CD4-positive, alpha-beta memory T cell (primary cell): ENCODE measurements at regions of chr3 and their contacts with region 1.

Region 1: GRCh38 chr3:125916376-125916978 is 52.5 kb upstream of the ROPN1B start:
- DNase-seq: peak in 3 of 5 donors; percentile 92 to 95 (median 93)
- H3K4me3 ChIP-seq: peak overlapping the region; percentile 11 to 76
- H3K4me3 Mint-ChIP-seq: peak overlapping the region; percentile 88 to 95 (median 90)
- H3K27ac ChIP-seq: peak overlapping the region; percentile 81
- H3K27ac Mint-ChIP-seq: peak overlapping the region; percentile 94 to 99 (median 97)
- H3K4me1 ChIP-seq: peaks cover 10% of the 10 kb centered on the region
- H3K4me1 Mint-ChIP-seq: peaks cover 5 to 26% (median 13%) of the 10 kb centered on the region in 4 donors
- H3K27me3 ChIP-seq: no peaks in the 10 kb centered on the region
- H3K27me3 Mint-ChIP-seq: no peaks in the 10 kb centered on the region

Region 2: GRCh38 chr3:123960781-123961507 is 1955.5 kb before region 1 on chr3 and contains the start of gene CCDC14:
- CTCF ChIA-PET with region 1: no interaction called
- POLR2A ChIA-PET with region 1: no interaction called
- intact Hi-C with region 1: loop called (anchors 5 kb)
- DNase-seq: peak; percentile 61 to 83 (median 65)
- H3K4me3 ChIP-seq: peak within 1 kb of the TSS; percentile 27 to 93
- H3K4me3 Mint-ChIP-seq: peak within 1 kb of the TSS; percentile 96 to 99 (median 98)
- H3K27ac ChIP-seq: peak within 1 kb of the TSS; percentile 65
- H3K27ac Mint-ChIP-seq: peak within 1 kb of the TSS; percentile 88 to 97 (median 93)
- H3K4me1 ChIP-seq: peaks cover 26% of the 10 kb centered on the region
- H3K4me1 Mint-ChIP-seq: peaks cover 13 to 38% (median 23%) of the 10 kb centered on the region in 4 donors
- H3K27me3 ChIP-seq: no peaks in the 10 kb centered on the region
- H3K27me3 Mint-ChIP-seq: peaks cover 0 to 2% of the 10 kb centered on the region in 2 donors
- total RNA-seq, gene CCDC14: 46.0 to 47.0 TPM

Region 3: DNA sequence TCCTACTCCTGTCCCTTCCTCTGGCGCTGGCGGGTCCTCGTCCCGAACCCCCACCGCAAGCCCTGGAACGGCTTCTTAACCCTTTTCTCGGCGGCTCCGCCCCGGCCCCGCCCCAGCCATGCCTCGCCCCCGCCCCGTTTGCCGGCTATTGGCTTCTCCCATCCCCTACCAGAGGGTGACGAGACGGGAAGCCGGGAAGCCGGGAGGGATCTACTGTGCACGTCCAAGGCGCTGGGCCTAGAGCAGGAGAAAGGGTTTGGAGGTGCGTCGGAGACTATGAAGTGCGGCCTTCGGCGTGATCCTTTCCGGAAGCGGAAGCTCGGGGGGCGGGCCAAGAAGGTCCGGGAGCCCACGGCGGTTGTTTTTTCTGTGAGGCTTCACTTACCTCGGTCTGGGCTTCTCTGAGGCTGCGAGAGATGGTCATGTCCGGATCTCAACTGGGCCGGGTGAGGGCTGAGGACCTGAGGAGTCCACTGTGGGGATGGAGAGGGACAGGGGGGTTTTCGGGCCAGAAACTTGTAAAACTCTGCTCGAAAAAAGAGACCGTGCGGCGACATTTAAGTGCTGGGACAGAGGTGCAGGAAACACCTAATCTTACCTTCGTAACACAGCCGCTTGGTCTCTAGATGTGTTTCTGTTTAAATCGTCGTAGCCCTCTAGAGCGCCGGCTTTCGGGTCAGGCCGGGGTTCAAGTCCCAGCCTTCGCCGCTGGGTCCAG is 73.9 kb after region 1 on chr3:
- CTCF ChIA-PET with region 1: no interaction called
- POLR2A ChIA-PET with region 1: interaction called, 5 read pairs
- intact Hi-C with region 1: loop called (anchors 2 kb)
- DNase-seq: peak in 4 of 5 donors; percentile 73 to 79 (median 78)
- H3K4me3 ChIP-seq: peak overlapping the region; percentile 18 to 60
- H3K4me3 Mint-ChIP-seq: peak overlapping the region in 7 of 8 donors; percentile 95 to 100 (median 99)
- H3K27ac ChIP-seq: peak overlapping the region; percentile 78
- H3K27ac Mint-ChIP-seq: peak overlapping the region in 6 of 7 donors; percentile 92 to 100 (median 98)
- H3K4me1 ChIP-seq: peaks cover 16% of the 10 kb centered on the region
- H3K4me1 Mint-ChIP-seq: peaks cover 2 to 31% (median 15%) of the 10 kb centered on the region in 4 donors
- H3K27me3 ChIP-seq: no peaks in the 10 kb centered on the region
- H3K27me3 Mint-ChIP-seq: peaks cover 0 to 4% of the 10 kb centered on the region in 2 donors

Region 4: DNA sequence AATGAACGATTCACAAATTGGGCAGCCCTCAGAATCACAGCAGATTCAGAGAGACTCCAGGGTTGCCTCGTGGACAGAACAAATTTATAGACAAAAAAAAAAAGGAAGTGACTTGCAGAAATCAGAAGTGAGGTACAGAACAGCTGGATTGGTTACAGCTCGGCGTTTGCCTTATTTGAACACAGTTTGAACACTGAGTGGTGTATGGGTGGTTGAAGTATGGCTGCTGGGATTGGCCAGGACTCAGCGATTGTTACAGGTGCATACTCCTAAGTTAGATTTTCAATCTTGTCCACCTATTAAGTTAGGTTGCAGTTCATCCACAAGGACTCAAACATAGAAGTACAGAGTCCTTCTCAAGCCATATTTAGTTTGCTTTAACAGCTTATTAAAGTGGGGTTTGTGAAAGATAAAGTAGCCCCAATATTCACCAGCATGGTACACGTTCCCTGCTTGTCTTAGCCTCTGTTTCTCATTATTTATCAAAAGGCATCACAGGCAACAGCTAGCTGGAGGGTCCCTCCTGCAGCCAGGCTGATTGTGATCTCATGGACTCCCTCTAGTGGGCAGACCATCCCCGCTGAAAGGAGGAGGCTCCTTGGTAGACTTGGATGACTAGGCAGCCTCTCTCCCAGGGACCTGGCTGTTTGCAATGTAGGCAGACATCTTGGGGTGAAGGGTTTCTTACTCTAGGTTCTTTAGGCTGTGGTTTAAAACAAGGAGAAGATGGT is 281.5 kb after region 1 on chr3:
- CTCF ChIA-PET with region 1: no interaction called
- POLR2A ChIA-PET with region 1: no interaction called
- intact Hi-C with region 1: loop called (anchors 5 kb)
- DNase-seq: peak in 3 of 5 donors; percentile 4 to 19 (median 9)
- H3K4me3 ChIP-seq: no peak overlapping the region
- H3K4me3 Mint-ChIP-seq: no peak overlapping the region
- H3K27ac ChIP-seq: no peak overlapping the region
- H3K27ac Mint-ChIP-seq: no peak overlapping the region
- H3K4me1 ChIP-seq: no peaks in the 10 kb centered on the region
- H3K4me1 Mint-ChIP-seq: peaks cover 0 to 1% (median 0%) of the 10 kb centered on the region in 4 donors
- H3K27me3 ChIP-seq: no peaks in the 10 kb centered on the region
- H3K27me3 Mint-ChIP-seq: peaks cover 8 to 15% of the 10 kb centered on the region in 2 donors

Region 5: GRCh38 chr3:126475413-126476114 is 559.1 kb after region 1 on chr3 and contains the start of gene ZXDC:
- CTCF ChIA-PET with region 1: no interaction called
- POLR2A ChIA-PET with region 1: interaction called, 9 read pairs
- intact Hi-C with region 1: loop called (anchors 1 kb)
- DNase-seq: peak; percentile 90 to 93 (median 92)
- H3K4me3 ChIP-seq: peak within 1 kb of the TSS; percentile 60 to 73
- H3K4me3 Mint-ChIP-seq: peak within 1 kb of the TSS; percentile 87 to 94 (median 92)
- H3K27ac ChIP-seq: peak within 1 kb of the TSS; percentile 64
- H3K27ac Mint-ChIP-seq: peak within 1 kb of the TSS; percentile 83 to 98 (median 92)
- H3K4me1 ChIP-seq: peaks cover 36% of the 10 kb centered on the region
- H3K4me1 Mint-ChIP-seq: peaks cover 30 to 55% (median 44%) of the 10 kb centered on the region in 4 donors
- H3K27me3 ChIP-seq: no peaks in the 10 kb centered on the region
- H3K27me3 Mint-ChIP-seq: no peaks in the 10 kb centered on the region
- total RNA-seq, gene ZXDC: 58.2 to 66.3 TPM

Region 6: GRCh38 chr3:126982471-126983175 is 1066.1 kb after region 1 on chr3 and contains the start of gene PLXNA1:
- CTCF ChIA-PET with region 1: no interaction called
- POLR2A ChIA-PET with region 1: no interaction called
- intact Hi-C with region 1: loop called (anchors 5 kb)
- DNase-seq: peak; percentile 88 to 97 (median 95)
- H3K4me3 ChIP-seq: peak within 1 kb of the TSS; percentile 61 to 76
- H3K4me3 Mint-ChIP-seq: peak within 1 kb of the TSS; percentile 84 to 92 (median 89)
- H3K27ac ChIP-seq: peak within 1 kb of the TSS; percentile 83
- H3K27ac Mint-ChIP-seq: peak within 1 kb of the TSS; percentile 95 to 98 (median 97)
- H3K4me1 ChIP-seq: peaks cover 17% of the 10 kb centered on the region
- H3K4me1 Mint-ChIP-seq: peaks cover 6 to 29% (median 17%) of the 10 kb centered on the region in 4 donors
- H3K27me3 ChIP-seq: no peaks in the 10 kb centered on the region
- H3K27me3 Mint-ChIP-seq: peaks cover 5 to 7% of the 10 kb centered on the region in 2 donors
- total RNA-seq, gene PLXNA1: 18.9 to 21.3 TPM

Region 7: DNA sequence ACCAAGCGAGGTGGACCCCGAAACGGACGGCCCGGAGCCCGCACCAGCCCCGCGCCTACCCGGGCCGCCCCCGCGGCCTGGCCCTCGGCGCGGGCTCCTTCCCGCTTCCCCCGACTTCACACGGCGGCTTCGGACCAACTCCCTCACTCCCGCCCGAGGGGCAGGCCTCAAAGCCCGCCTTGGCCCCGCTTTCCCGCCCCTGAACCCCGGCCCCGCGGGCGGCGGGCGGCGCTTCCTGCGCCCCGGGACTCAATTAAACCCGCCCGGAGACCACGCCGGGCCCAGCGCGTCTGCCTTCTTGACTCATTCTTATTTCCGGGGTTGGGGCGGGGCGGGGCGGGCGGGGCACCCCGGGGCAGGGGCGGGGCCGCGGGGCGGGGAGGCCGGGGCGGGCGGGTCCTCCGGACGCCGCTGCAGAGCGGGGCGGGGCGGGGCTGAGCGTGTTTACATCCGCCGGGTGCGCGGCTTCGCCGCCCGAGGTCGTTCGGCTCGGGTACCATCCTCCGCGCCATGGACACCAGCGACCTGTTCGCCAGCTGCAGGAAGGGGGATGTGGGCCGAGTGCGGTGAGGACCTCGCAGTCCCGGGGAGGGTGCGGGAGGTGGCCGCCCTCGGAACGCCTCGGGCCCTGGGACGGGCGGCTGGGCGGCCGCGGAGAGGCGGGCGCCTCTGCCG is 1756.2 kb after region 1 on chr3 and contains the start of gene ABTB1:
- CTCF ChIA-PET with region 1: no interaction called
- POLR2A ChIA-PET with region 1: no interaction called
- intact Hi-C with region 1: loop called (anchors 10 kb)
- DNase-seq: peak; percentile 79 to 86 (median 85)
- H3K4me3 ChIP-seq: peak within 1 kb of the TSS; percentile 61 to 80
- H3K4me3 Mint-ChIP-seq: peak within 1 kb of the TSS; percentile 88 to 94 (median 92)
- H3K27ac ChIP-seq: peak within 1 kb of the TSS; percentile 86
- H3K27ac Mint-ChIP-seq: peak within 1 kb of the TSS; percentile 90 to 98 (median 94)
- H3K4me1 ChIP-seq: peaks cover 31% of the 10 kb centered on the region
- H3K4me1 Mint-ChIP-seq: peaks cover 18 to 41% (median 28%) of the 10 kb centered on the region in 4 donors
- H3K27me3 ChIP-seq: no peaks in the 10 kb centered on the region
- H3K27me3 Mint-ChIP-seq: no peaks in the 10 kb centered on the region
- total RNA-seq, gene ABTB1: 167 to 169 TPM